ENCODE measurements at regions of chr19 and their contacts with region 1.

Region 1: GRCh38 chr19:39125554-39126311 is at the start of gene PAK4:
- DNase-seq: peak; percentile 99
- H3K4me3 Mint-ChIP-seq: peak within 1 kb of the TSS; percentile 87
- H3K27ac Mint-ChIP-seq: peak within 1 kb of the TSS; percentile 91
- H3K4me1 Mint-ChIP-seq: peaks cover 34% of the 10 kb centered on the region
- H3K27me3 Mint-ChIP-seq: no peaks in the 10 kb centered on the region
- total RNA-seq, gene PAK4: 16.3 to 17.8 TPM

Region 2: GRCh38 chr19:38975214-38975860 is 150.4 kb before region 1 on chr19 and contains the start of gene FBXO17:
- CTCF ChIA-PET with region 1: no interaction called
- POLR2A ChIA-PET with region 1: no interaction called
- intact Hi-C with region 1: loop called (anchors 10 kb)
- DNase-seq: no peak
- H3K4me3 Mint-ChIP-seq: no peak within 1 kb of the TSS
- H3K27ac Mint-ChIP-seq: no peak within 1 kb of the TSS
- H3K4me1 Mint-ChIP-seq: peaks cover 24% of the 10 kb centered on the region
- H3K27me3 Mint-ChIP-seq: peaks cover 25% of the 10 kb centered on the region
- total RNA-seq, gene FBXO17: not detected

Region 3: GRCh38 chr19:39187559-39187957 is 61.8 kb after region 1 on chr19:
- CTCF ChIA-PET with region 1: interaction called, 14 read pairs
- POLR2A ChIA-PET with region 1: no interaction called
- intact Hi-C with region 1: loop called (anchors 1 kb)
- DNase-seq: no peak
- H3K4me3 Mint-ChIP-seq: no peak overlapping the region
- H3K27ac Mint-ChIP-seq: no peak overlapping the region
- H3K4me1 Mint-ChIP-seq: no peaks in the 10 kb centered on the region
- H3K27me3 Mint-ChIP-seq: peaks cover 10% of the 10 kb centered on the region

Region 4: DNA sequence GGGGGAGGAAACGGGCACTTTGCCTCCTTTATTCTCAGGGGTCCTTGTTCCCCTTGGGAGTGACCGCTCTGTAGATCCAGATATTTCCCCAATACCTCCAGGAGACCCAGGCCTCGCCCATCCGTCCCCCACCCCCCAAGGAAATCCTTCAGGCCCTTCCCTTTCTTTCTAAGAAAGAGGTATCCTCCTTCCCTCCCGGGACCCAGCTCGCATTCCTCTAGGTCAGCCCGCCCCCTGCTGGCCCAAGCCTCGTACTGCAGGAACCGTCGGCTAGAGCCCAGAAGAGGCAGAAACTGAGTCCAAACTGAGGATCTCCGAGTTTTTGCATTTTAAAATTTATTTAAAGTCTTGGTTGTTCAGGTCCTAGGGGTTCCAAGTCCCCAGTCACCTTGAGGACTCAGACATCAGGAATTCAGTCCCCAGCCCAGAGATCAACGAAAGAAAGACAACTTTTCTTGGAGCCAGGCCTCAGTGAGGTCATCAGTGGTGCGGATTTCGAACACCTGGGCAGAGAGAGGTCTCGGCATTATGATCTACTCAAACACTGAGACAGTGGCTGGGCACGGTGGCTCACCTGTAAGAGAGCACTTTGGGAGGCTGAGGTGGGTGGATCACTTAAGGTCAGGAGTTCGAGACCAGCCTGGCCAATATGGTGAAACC is 202.4 kb after region 1 on chr19:
- CTCF ChIA-PET with region 1: interaction called, 21 read pairs
- POLR2A ChIA-PET with region 1: no interaction called
- intact Hi-C with region 1: loop called (anchors 5 kb)
- DNase-seq: peak; percentile 86
- H3K4me3 Mint-ChIP-seq: no peak overlapping the region
- H3K27ac Mint-ChIP-seq: peak overlapping the region; percentile 36
- H3K4me1 Mint-ChIP-seq: peaks cover 40% of the 10 kb centered on the region
- H3K27me3 Mint-ChIP-seq: no peaks in the 10 kb centered on the region

Region 5: DNA sequence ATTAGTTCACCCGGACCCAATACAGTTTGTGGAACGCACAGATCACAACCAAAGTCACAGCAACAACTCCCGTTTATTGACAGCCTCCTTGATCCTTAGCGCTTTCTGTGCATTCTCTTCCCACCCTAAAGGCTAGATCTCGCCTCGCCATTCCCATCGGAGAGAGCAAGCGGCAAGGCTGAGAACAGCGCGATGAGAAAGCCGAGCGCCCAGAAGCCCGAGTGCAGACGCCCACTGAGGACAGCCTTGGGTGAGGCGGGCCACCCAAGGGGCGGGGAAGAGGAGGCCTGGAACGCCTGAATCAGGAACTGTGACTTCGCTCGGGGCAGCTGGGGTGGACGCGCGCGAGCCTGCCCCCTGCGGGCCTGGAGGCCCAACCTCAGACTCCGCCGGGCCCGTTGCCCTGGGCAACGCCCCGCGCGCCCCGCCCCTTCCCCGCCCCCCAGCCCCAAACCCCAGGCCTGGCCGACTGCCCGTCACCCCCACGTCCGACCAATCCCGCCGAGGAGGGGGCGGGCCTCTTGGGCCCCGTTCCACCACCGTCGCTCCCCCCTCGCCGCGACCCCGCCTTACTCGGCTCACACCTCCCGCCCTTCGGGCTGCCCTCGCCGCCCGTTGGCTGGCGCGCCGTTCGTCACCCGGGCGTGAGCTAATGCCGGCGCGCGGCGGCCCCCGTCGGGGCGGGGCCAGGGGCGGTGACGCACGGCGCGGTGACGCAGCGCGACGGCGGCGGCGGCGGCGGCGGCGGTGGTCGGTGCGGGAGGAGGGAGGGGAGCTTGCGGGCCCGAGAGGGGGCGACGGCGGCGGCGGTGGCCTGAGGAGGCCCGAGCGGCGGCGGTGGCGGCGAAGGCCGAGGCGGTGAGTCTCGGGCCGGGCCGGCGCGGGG is 216.2 kb after region 1 on chr19 and contains the start of gene SAMD4B:
- CTCF ChIA-PET with region 1: interaction called, 4 read pairs
- POLR2A ChIA-PET with region 1: no interaction called
- intact Hi-C with region 1: loop called (anchors 5 kb)
- DNase-seq: peak; percentile 100
- H3K4me3 Mint-ChIP-seq: peak within 1 kb of the TSS; percentile 98
- H3K27ac Mint-ChIP-seq: peak within 1 kb of the TSS; percentile 91
- H3K4me1 Mint-ChIP-seq: peaks cover 65% of the 10 kb centered on the region
- H3K27me3 Mint-ChIP-seq: no peaks in the 10 kb centered on the region
- total RNA-seq, gene SAMD4B: 49.4 to 51.3 TPM

Region 6: DNA sequence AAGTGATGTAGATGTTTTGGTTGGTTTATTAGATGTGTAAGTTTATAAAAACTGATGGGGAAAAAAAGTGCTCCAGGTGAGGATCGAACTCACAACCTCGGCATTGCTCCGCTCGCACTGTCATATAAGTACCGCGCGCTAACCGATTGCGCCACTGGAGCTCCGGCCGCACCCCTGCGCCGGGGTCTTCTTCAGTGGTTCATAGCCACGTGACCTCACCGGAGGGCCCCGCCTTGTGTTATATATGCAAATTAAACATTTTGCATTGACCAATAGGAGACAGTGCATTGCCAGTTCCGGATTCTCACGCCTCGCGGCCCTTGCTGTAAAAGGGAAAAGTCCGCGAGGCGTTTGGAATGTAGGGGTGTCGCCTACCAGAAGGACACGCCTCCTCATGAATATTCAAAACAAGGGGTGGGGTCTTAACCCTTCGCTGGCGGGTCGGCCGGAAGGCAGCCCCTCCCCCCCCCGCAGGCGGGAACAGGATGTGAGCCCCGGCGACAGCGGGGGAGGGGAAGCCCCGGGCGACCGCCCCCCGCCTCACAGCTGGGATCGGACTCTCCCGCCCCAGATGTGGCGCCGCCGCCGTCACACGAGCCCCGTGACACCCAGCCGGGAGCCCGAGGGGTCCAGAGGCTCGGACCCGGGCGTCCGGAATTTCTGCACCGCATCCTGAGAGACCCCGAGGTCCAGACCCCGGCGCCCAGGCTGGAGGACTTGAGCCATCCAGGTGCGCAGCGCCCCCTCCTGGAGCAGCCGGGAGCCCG is 286.6 kb after region 1 on chr19 and contains the start of gene PLEKHG2:
- CTCF ChIA-PET with region 1: interaction called, 4 read pairs
- POLR2A ChIA-PET with region 1: no interaction called
- intact Hi-C with region 1: loop called (anchors 1 kb)
- DNase-seq: peak; percentile 98
- H3K4me3 Mint-ChIP-seq: peak within 1 kb of the TSS; percentile 84
- H3K27ac Mint-ChIP-seq: peak within 1 kb of the TSS; percentile 88
- H3K4me1 Mint-ChIP-seq: peaks cover 34% of the 10 kb centered on the region
- H3K27me3 Mint-ChIP-seq: peaks cover 3% of the 10 kb centered on the region
- total RNA-seq, gene PLEKHG2: 74.9 to 80.6 TPM

Region 7: DNA sequence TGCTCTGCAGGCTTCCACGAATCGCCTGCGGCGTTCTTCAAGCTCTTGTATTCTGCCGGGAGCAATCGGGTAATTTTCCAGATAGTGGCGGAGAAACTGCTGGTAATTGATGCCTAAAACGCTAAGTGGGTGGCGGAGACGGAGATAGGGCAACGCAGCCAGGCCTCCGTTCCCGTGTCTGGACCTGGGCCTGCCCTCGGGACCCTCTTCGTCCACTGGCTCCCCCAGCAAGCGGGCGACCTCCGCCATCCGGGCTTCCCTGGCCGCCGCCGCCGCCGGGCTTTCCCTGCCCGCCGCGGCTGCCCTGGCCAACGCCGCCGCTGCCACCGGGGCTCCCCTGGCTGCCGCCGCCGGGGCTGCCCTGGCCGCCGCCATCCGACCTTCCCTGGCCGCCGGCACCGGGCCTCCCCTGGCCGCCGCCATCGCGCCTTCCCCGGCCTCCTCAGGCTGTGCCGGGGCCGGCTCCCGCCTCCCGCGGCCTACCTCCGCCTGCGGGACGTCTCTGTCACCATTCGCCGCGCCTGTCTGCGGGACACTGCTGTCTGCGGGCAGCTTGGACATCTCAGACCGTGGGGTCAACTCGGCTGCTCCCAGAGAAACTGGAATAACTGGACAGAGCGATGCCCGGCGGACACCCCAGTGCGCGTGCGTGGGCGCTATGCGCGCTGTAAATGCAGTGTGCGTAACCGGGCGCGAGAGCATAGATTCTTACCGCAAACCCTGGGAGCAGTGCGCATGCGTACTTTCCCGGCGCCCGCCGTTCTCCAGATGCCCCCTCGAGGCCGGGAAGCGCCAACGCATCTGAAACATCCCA is 414.0 kb after region 1 on chr19 and contains the start of gene EID2:
- CTCF ChIA-PET with region 1: no interaction called
- POLR2A ChIA-PET with region 1: no interaction called
- intact Hi-C with region 1: loop called (anchors 5 kb)
- DNase-seq: peak; percentile 98
- H3K4me3 Mint-ChIP-seq: peak within 1 kb of the TSS; percentile 94
- H3K27ac Mint-ChIP-seq: peak within 1 kb of the TSS; percentile 96
- H3K4me1 Mint-ChIP-seq: peaks cover 51% of the 10 kb centered on the region
- H3K27me3 Mint-ChIP-seq: peaks cover 2% of the 10 kb centered on the region
- total RNA-seq, gene EID2: 13.0 to 13.1 TPM

Measured in activated CD4-positive, alpha-beta memory T cell treated with anti-CD3 and anti-CD28 coated beads for 36 hours (primary cell).